ENCODE measurements at regions of chr22 and their contacts with region 1.

Region 1: DNA sequence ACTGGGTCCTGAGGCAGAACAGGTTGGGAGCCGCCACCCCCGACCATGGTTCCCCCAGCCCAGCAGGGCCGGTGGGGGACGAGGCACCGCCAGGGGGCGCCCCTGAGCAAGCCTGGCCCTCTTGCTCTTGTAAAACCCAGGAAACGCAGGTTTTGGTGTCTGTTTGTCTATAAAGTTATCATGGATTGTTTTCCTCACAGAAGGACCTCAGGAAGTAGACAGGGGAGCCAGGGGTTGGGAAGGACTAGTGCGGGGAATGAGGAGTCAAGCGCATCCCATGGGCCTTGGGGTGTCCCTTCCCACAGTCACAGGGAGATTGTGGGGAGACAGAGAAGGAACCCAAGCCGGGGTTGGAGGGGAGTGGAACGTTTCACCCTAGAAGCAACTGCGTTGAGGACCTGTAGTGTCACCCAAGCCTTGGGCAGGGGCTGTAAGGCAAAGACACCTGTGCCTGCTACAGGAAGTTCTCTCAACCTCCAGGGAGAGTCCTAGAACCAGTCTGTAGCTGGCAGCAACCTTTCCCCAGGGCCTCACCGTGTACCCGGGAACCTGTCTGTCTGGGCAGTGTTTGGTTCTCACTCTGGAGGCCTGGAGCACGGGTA is 26.4 kb downstream of the KCTD17 start:
- DNase-seq: peak; percentile 85 to 90
- ATAC-seq: peak; percentile 18 to 42 (median 33)
- H3K4me3 ChIP-seq: no peak overlapping the region
- H3K4me3 Mint-ChIP-seq: peak overlapping the region; percentile 61
- H3K27ac ChIP-seq: no peak overlapping the region
- H3K27ac Mint-ChIP-seq: peak overlapping the region; percentile 97 to 99
- H3K4me1 ChIP-seq: peaks cover 33% of the 10 kb centered on the region
- H3K4me1 Mint-ChIP-seq: peaks cover 30 to 31% of the 10 kb centered on the region in 2 donors
- H3K27me3 ChIP-seq: no peaks in the 10 kb centered on the region
- H3K27me3 Mint-ChIP-seq: peaks cover 0 to 6% of the 10 kb centered on the region in 2 donors
- CTCF ChIP-seq: peak; percentile 100

Region 2: DNA sequence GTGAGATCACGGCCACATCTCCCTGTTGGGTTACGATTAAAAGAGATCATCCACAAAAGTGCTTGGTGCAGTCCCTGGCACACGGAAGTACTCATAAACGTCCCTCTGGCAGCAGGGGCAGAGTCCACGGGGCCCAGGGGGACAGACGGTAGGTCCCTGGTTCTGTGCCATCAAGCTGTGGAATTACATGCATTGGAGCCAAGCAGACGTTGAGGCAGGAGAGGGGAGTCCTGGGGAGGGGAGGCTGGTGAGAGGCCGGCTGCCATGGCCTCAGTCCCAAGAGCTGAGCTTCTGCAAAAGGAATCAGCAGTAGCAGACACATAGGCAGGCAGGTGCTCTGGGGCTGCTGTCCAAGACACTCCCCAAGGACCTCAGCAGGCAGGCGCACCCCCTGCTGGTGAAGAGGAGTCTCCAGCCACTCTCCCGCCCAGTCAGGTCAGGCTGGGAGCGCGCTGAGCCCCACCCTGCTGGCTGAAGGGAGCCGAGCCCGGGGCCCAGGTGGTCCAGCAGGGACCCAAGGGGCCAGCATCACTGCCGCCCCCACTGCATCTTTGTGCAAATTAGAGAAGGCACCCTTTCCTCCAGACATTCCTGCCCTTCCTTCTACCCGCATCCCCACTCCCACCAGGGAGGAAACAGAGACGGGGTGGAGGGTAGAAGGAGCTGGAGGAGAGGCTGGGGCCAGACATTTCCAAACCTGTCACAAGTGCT is 34.0 kb before region 1 on chr22:
- intact Hi-C with region 1: no loop called
- DNase-seq: peak in 1 of 2 donors; percentile 57
- ATAC-seq: peak; percentile 54 to 75 (median 65)
- H3K4me3 ChIP-seq: no peak overlapping the region
- H3K4me3 Mint-ChIP-seq: no peak overlapping the region
- H3K27ac ChIP-seq: no peak overlapping the region
- H3K27ac Mint-ChIP-seq: no peak overlapping the region
- H3K4me1 ChIP-seq: no peaks in the 10 kb centered on the region
- H3K4me1 Mint-ChIP-seq: no peaks in the 10 kb centered on the region
- H3K27me3 ChIP-seq: no peaks in the 10 kb centered on the region
- H3K27me3 Mint-ChIP-seq: peaks cover 0 to 5% of the 10 kb centered on the region in 2 donors
- CTCF ChIP-seq: peak; percentile 44

Region 3: GRCh38 chr22:37098976-37099591 is 21.1 kb after region 1 on chr22:
- intact Hi-C with region 1: no loop called
- DNase-seq: peak in 1 of 2 donors; percentile 55
- ATAC-seq: peak in 2 of 3 donors; percentile 46 to 66
- H3K4me3 ChIP-seq: no peak overlapping the region
- H3K4me3 Mint-ChIP-seq: no peak overlapping the region
- H3K27ac ChIP-seq: no peak overlapping the region
- H3K27ac Mint-ChIP-seq: peak overlapping the region in 1 of 2 donors; percentile 35
- H3K4me1 ChIP-seq: peaks cover 10% of the 10 kb centered on the region
- H3K4me1 Mint-ChIP-seq: peaks cover 10 to 14% of the 10 kb centered on the region in 2 donors
- H3K27me3 ChIP-seq: peaks cover 2% of the 10 kb centered on the region
- H3K27me3 Mint-ChIP-seq: peaks cover 0 to 2% of the 10 kb centered on the region in 2 donors
- CTCF ChIP-seq: no peak

Region 4: DNA sequence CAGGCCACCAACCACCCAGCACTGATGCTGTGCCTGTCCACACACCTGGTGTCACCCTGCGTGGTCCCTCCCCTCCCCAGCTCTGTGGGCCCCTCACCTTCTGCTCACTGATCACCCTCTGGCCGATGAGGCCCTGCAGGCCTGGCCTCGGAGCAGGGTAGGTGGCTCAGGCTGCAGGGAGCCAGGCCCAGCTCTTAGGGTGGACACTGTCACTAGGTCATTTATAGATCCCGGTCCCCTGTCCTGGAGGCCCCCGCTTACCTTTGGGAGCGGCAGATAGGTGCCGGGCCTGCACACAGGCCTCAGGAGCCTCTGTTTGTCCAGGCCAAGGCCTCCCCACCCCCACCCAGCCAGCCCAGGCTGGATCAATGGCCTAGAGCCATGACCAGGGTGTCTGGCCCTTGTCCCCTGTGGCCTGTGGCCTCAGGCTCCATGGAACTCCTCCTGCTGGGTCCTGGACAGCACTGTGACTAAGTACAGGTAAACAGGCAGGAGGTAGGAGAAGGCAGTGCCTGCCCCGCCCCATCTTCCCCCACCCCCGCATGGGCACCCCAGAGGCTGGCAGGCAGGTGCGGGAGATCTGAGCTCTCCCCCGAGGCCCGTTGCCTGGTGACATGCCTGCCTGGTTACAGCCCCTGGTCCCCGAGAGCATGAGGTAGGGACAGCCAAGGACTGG is 31.4 kb after region 1 on chr22 and contains the start of gene TMPRSS6:
- intact Hi-C with region 1: no loop called
- DNase-seq: no peak
- ATAC-seq: no peak
- H3K4me3 ChIP-seq: no peak within 1 kb of the TSS
- H3K4me3 Mint-ChIP-seq: no peak within 1 kb of the TSS
- H3K27ac ChIP-seq: no peak within 1 kb of the TSS
- H3K27ac Mint-ChIP-seq: peak within 1 kb of the TSS in 1 of 2 donors; percentile 24
- H3K4me1 ChIP-seq: peaks cover 10% of the 10 kb centered on the region
- H3K4me1 Mint-ChIP-seq: peaks cover 0 to 11% of the 10 kb centered on the region in 2 donors
- H3K27me3 ChIP-seq: no peaks in the 10 kb centered on the region
- H3K27me3 Mint-ChIP-seq: no peaks in the 10 kb centered on the region
- CTCF ChIP-seq: no peak
- total RNA-seq, gene TMPRSS6: 1.1 to 4.7 (median 3.4) TPM

Region 5: DNA sequence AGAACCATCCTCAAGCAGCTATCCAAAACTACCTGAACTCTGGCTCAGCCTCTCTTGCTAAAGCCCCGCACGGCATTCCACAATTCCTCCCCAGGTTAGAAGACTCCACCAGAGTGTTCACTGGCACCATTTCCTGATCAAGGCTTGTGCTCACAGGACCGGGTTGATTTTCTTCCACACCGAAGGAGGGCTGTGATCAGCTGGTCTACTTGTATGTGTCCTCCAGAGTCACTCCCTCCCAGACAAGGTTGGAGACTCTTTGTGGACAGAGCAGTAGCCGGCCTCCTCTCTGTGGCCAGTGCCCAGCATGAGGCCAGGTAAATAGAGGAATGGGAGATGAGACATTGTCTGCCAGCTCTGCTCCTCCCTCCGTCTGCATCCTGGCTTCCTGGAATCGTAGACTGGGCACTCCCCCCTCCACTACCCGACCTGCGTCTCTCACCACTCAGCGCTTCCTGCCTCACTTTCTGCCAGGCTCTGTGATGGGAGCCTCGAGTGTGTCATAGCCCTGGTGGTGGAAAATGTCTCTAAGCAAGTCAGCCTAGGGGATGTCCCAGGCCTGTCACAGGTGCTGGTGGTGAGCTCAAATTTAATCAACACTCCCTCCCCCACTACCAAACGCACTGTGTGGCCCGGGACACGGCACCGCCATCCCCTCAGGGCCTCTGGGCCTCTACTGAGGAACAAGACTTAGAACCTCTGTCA is 44.1 kb after region 1 on chr22:
- intact Hi-C with region 1: loop called (anchors 1 kb)
- DNase-seq: peak; percentile 80 to 98
- ATAC-seq: peak; percentile 88 to 98 (median 92)
- H3K4me3 ChIP-seq: no peak overlapping the region
- H3K4me3 Mint-ChIP-seq: peak overlapping the region; percentile 74
- H3K27ac ChIP-seq: peak overlapping the region; percentile 84
- H3K27ac Mint-ChIP-seq: peak overlapping the region; percentile 94 to 99
- H3K4me1 ChIP-seq: peaks cover 52% of the 10 kb centered on the region
- H3K4me1 Mint-ChIP-seq: peaks cover 40 to 46% of the 10 kb centered on the region in 2 donors
- H3K27me3 ChIP-seq: no peaks in the 10 kb centered on the region
- H3K27me3 Mint-ChIP-seq: no peaks in the 10 kb centered on the region
- CTCF ChIP-seq: no peak

Region 6: GRCh38 chr22:37148742-37149665 is 71.0 kb after region 1 on chr22:
- intact Hi-C with region 1: loop called (anchors 5 kb)
- DNase-seq: peak in 1 of 2 donors; percentile 32
- ATAC-seq: no peak
- H3K4me3 ChIP-seq: peak overlapping the region; percentile 92
- H3K4me3 Mint-ChIP-seq: peak overlapping the region; percentile 99
- H3K27ac ChIP-seq: peak overlapping the region; percentile 82
- H3K27ac Mint-ChIP-seq: peak overlapping the region; percentile 95 to 99
- H3K4me1 ChIP-seq: peaks cover 61% of the 10 kb centered on the region
- H3K4me1 Mint-ChIP-seq: peaks cover 71 to 85% of the 10 kb centered on the region in 2 donors
- H3K27me3 ChIP-seq: no peaks in the 10 kb centered on the region
- H3K27me3 Mint-ChIP-seq: no peaks in the 10 kb centered on the region
- CTCF ChIP-seq: no peak

Region 7: GRCh38 chr22:37260901-37261336 is 182.9 kb after region 1 on chr22:
- intact Hi-C with region 1: loop called (anchors 1 kb)
- DNase-seq: peak; percentile 53 to 83
- ATAC-seq: peak; percentile 78 to 96 (median 93)
- H3K4me3 ChIP-seq: no peak overlapping the region
- H3K4me3 Mint-ChIP-seq: no peak overlapping the region
- H3K27ac ChIP-seq: no peak overlapping the region
- H3K27ac Mint-ChIP-seq: peak overlapping the region in 1 of 2 donors; percentile 73
- H3K4me1 ChIP-seq: peaks cover 22% of the 10 kb centered on the region
- H3K4me1 Mint-ChIP-seq: peaks cover 9 to 17% of the 10 kb centered on the region in 2 donors
- H3K27me3 ChIP-seq: no peaks in the 10 kb centered on the region
- H3K27me3 Mint-ChIP-seq: peaks cover 0 to 9% of the 10 kb centered on the region in 2 donors
- CTCF ChIP-seq: peak; percentile 90

Region 8: GRCh38 chr22:37457093-37457893 is 379.3 kb after region 1 on chr22:
- intact Hi-C with region 1: loop called (anchors 2 kb)
- DNase-seq: peak; percentile 79 to 89
- ATAC-seq: peak; percentile 86 to 99 (median 96)
- H3K4me3 ChIP-seq: no peak overlapping the region
- H3K4me3 Mint-ChIP-seq: no peak overlapping the region
- H3K27ac ChIP-seq: no peak overlapping the region
- H3K27ac Mint-ChIP-seq: no peak overlapping the region
- H3K4me1 ChIP-seq: no peaks in the 10 kb centered on the region
- H3K4me1 Mint-ChIP-seq: peaks cover 5 to 21% of the 10 kb centered on the region in 2 donors
- H3K27me3 ChIP-seq: no peaks in the 10 kb centered on the region
- H3K27me3 Mint-ChIP-seq: no peaks in the 10 kb centered on the region
- CTCF ChIP-seq: peak; percentile 96